Activated CD8-positive, alpha-beta T cell treated with anti-CD3 and anti-CD28 coated beads, Interleukin-2, amount 10 ng/mL, durations not matched to agents 7 days and 5 days (primary cell): ENCODE measurements at regions of chr5 and their contacts with region 1.

Region 1: GRCh38 chr5:138503487-138504270 is 38.4 kb downstream of the EGR1 start:
- DNase-seq: peak; percentile 34
- ATAC-seq: peak; percentile 47
- H3K4me3 Mint-ChIP-seq: no peak overlapping the region
- H3K27ac Mint-ChIP-seq: no peak overlapping the region
- H3K4me1 Mint-ChIP-seq: no peaks in the 10 kb centered on the region
- H3K27me3 Mint-ChIP-seq: no peaks in the 10 kb centered on the region

Region 2: DNA sequence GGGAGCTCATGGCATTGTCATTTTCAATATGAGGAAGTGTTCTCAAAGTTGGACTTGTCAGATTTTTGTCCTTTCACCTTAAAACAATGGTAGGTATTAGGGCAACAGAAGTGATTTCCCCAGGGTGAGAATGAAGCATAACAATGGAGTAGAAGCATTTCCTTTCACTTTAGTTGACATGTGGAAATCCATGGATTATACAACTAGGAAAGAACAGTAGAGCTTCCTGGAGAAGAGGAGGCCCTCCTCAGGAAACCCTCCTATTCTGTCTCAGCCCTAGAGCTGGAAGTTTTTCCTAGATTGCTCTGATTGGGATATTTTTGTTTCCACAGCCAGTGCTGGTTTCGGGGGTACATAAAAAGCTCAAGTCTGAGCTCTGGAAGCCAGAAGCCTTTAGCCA is 78.6 kb before region 1 on chr5:
- CTCF ChIA-PET with region 1: no interaction called
- POLR2A ChIA-PET with region 1: no interaction called
- DNase-seq: no peak
- ATAC-seq: no peak
- H3K4me3 Mint-ChIP-seq: no peak overlapping the region
- H3K27ac Mint-ChIP-seq: peak overlapping the region; percentile 10
- H3K4me1 Mint-ChIP-seq: no peaks in the 10 kb centered on the region
- H3K27me3 Mint-ChIP-seq: no peaks in the 10 kb centered on the region

Region 3: GRCh38 chr5:138449501-138450239 is 54.0 kb before region 1 on chr5:
- CTCF ChIA-PET with region 1: interaction called, 65 read pairs
- POLR2A ChIA-PET with region 1: no interaction called
- DNase-seq: peak; percentile 83
- ATAC-seq: peak; percentile 95
- H3K4me3 Mint-ChIP-seq: peak overlapping the region; percentile 31
- H3K27ac Mint-ChIP-seq: no peak overlapping the region
- H3K4me1 Mint-ChIP-seq: peaks cover 5% of the 10 kb centered on the region
- H3K27me3 Mint-ChIP-seq: peaks cover 2% of the 10 kb centered on the region

Region 4: DNA sequence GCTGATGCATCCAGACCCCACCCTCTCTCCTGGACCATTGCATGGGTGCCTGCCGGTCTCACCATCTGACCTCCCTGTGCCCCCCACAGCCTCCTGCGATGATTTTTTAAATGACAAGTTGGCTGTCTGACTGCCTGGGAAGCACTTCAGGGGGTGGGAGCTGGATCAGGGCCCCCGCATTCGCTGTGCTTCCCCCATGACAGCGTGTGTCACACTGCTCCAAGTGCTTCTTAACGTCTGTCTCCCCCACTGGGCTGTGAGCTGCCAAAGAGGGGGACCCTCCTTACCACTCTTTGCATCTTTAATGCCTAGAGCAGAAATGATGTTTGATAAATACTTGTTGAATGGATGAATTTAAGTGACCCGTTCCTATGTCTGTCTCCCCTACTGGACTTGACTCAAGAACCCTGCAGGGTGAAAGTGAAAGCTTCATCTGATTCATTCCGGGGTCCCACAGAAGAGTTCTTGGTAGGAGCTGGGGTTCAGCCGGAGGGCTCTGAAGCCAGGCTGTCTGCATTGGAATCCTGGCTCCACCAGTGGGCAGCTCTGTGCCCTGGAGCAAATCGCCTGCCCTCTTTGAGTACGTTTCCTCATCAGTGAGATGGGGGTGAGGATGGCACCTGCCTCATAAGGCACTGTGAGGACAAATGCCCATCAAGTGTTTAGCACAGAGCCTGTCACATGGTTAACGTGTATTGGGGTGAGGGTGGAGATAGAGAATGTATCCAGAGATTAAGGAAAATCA is 46.0 kb before region 1 on chr5:
- CTCF ChIA-PET with region 1: interaction called, 34 read pairs
- POLR2A ChIA-PET with region 1: no interaction called
- DNase-seq: no peak
- ATAC-seq: no peak
- H3K4me3 Mint-ChIP-seq: no peak overlapping the region
- H3K27ac Mint-ChIP-seq: peak overlapping the region; percentile 69
- H3K4me1 Mint-ChIP-seq: peaks cover 32% of the 10 kb centered on the region
- H3K27me3 Mint-ChIP-seq: no peaks in the 10 kb centered on the region

Region 5: GRCh38 chr5:138491669-138492559 is 11.8 kb before region 1 on chr5:
- CTCF ChIA-PET with region 1: interaction called, 18 read pairs
- POLR2A ChIA-PET with region 1: no interaction called
- DNase-seq: peak; percentile 89
- ATAC-seq: peak; percentile 100
- H3K4me3 Mint-ChIP-seq: peak overlapping the region; percentile 80
- H3K27ac Mint-ChIP-seq: peak overlapping the region; percentile 70
- H3K4me1 Mint-ChIP-seq: peaks cover 11% of the 10 kb centered on the region
- H3K27me3 Mint-ChIP-seq: peaks cover 27% of the 10 kb centered on the region

Region 6: DNA sequence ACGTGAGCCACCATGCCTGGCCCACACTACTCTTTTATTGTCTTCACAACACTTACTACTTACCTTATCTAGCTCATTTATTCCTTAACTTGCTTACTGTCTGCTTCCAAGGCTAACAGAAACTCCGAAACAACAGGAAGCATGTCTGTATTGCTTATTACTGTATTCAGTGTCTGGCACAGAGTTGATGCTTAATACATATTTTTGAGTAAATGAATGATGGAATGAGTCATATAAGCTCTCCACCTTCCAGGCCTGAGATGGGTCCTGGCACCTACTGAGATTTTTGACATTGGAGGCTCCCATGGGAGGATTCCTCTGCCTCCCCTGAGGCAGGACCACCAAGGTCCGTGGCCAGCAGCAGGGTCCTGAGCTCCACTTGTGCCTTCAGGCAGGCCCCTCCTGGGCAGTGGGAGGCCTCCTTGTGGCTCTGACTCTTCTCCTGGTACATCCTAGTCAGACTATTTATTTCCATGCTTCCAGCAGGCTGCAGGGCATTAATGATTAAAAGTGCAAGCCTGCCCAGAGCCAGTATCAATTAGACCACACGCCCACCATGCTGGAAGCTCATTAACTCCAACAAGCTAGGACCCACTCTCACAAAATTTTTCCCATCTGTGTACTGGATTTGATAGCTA is 173.0 kb after region 1 on chr5:
- CTCF ChIA-PET with region 1: no interaction called
- POLR2A ChIA-PET with region 1: no interaction called
- DNase-seq: no peak
- ATAC-seq: no peak
- H3K4me3 Mint-ChIP-seq: no peak overlapping the region
- H3K27ac Mint-ChIP-seq: no peak overlapping the region
- H3K4me1 Mint-ChIP-seq: no peaks in the 10 kb centered on the region
- H3K27me3 Mint-ChIP-seq: peaks cover 69% of the 10 kb centered on the region

Region 7: DNA sequence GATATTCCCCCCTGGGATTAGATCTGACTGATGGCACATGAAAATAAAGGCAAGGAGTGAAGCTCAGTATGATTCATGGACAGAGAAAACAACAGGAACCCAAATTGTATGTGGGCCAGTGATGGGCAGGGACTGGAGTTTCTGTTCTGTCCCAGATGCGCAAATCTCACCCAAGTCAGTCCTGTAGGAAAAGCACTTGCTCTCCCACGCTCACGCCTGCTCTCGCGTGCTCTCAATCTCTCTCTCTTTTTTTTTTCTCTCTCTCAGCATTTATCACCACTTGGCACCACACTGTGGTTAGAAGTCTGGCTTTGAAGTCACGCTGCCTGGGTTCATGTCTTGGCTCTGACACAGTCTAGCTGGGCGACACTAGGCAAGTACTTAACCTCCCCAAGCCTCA is 477.9 kb after region 1 on chr5:
- CTCF ChIA-PET with region 1: no interaction called
- POLR2A ChIA-PET with region 1: no interaction called
- DNase-seq: peak; percentile 62
- ATAC-seq: peak; percentile 48
- H3K4me3 Mint-ChIP-seq: no peak overlapping the region
- H3K27ac Mint-ChIP-seq: peak overlapping the region; percentile 53
- H3K4me1 Mint-ChIP-seq: peaks cover 71% of the 10 kb centered on the region
- H3K27me3 Mint-ChIP-seq: no peaks in the 10 kb centered on the region